GM12878 (cell line): ENCODE measurements at regions of chr17 and their contacts with region 1.

Region 1: GRCh38 chr17:18217412-18218015 is 7.9 kb upstream of the LLGL1 start:
- DNase-seq: peak; percentile 2
- ATAC-seq: peak; percentile 96
- H3K4me3 ChIP-seq: no peak overlapping the region
- H3K27ac ChIP-seq: no peak overlapping the region
- H3K4me1 ChIP-seq: peaks cover 10% of the 10 kb centered on the region
- H3K27me3 ChIP-seq: no peaks in the 10 kb centered on the region
- CTCF ChIP-seq: peak; percentile 94 to 99 (median 96)
- EP300 ChIP-seq: no peak
- POLR2A ChIP-seq: no peak
- RAD21 ChIP-seq: peak; percentile 79

Region 2: DNA sequence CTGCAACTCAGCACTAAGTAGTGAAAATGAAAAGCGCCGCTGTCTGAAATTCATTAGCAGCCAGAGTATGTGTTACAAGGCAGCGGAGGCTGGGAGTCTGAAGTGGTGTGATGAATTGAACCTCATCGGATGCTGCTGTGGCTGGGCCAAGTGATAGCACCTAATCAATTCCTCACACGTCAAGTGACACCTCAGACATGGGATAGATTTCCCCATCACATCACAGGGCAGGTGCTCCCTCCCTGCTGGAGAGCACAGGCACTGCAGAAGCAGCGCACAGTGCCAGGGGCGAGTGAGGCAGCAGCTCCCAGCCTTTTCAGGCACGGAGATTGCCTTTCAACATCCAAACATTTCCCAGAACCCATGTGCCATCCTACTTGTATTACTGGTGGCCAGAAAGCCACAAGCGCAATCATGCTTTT is 212.6 kb before region 1 on chr17:
- CTCF ChIA-PET with region 1: no interaction called
- POLR2A ChIA-PET with region 1: no interaction called
- RAD21 ChIA-PET with region 1: no interaction called
- SMC1A ChIA-PET with region 1: no interaction called
- in situ Hi-C with region 1: no loop called
- intact Hi-C with region 1: no loop called
- DNase-seq: no peak
- ATAC-seq: no peak; the same call in 2 of the 3 replicates
- H3K4me3 ChIP-seq: no peak overlapping the region
- H3K27ac ChIP-seq: no peak overlapping the region
- H3K4me1 ChIP-seq: no peaks in the 10 kb centered on the region
- H3K27me3 ChIP-seq: no peaks in the 10 kb centered on the region
- CTCF ChIP-seq: 0 out of 6 replicates have a peak, but pooled peaks of 1 of the 3 experiments have one; percentile 9
- EP300 ChIP-seq: no peak
- POLR2A ChIP-seq: no peak
- RAD21 ChIP-seq: no peak

Region 3: DNA sequence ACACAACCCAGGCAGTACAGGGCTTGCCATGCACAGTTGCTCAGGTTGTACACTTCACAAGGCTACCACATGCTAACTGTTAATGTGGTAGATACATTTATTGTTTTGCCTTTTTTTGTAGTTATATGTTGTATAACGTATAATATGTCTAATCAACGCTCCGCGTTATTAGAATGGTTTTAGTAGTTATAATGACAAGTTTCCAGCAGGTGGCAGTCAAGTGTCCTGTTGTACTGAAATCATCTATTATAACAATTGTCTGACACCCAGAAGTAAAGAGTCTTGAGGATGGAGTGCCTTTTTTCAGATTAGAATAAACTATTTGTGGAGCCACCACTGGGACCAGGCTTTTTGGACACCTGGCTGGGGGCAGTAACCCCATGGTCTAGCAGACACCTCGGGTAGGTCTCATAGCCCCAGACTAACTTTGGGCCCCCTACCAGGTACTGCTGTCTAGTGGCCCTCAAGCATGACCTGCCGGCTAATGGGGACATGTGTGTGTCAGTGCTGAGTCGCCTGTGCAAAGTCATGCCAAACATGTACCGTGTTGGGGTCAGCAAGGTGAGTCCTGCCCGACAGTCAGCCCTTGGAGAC is 76.2 kb before region 1 on chr17:
- CTCF ChIA-PET with region 1: interaction called, 21 read pairs
- POLR2A ChIA-PET with region 1: no interaction called
- RAD21 ChIA-PET with region 1: interaction called, 5 read pairs
- SMC1A ChIA-PET with region 1: interaction called, 9 read pairs
- in situ Hi-C with region 1: no loop called
- intact Hi-C with region 1: loop called (anchors 2 kb)
- DNase-seq: no peak
- ATAC-seq: peak; percentile 72
- H3K4me3 ChIP-seq: no peak overlapping the region
- H3K27ac ChIP-seq: no peak overlapping the region
- H3K4me1 ChIP-seq: no peaks in the 10 kb centered on the region
- H3K27me3 ChIP-seq: no peaks in the 10 kb centered on the region
- CTCF ChIP-seq: peak; percentile 40 to 69 (median 60)
- EP300 ChIP-seq: no peak
- POLR2A ChIP-seq: no peak
- RAD21 ChIP-seq: peak; percentile 70